ENCODE measurements at regions of chr18 and their contacts with region 1.

Region 1: GRCh38 chr18:2932247-2933181 is 80.4 kb downstream of the LPIN2 start:
- DNase-seq: peak; percentile 71
- H3K4me3 Mint-ChIP-seq: no peak overlapping the region
- H3K27ac Mint-ChIP-seq: no peak overlapping the region
- H3K4me1 Mint-ChIP-seq: peaks cover 10% of the 10 kb centered on the region
- H3K27me3 Mint-ChIP-seq: no peaks in the 10 kb centered on the region
- CTCF ChIP-seq: peak; percentile 69

Region 2: DNA sequence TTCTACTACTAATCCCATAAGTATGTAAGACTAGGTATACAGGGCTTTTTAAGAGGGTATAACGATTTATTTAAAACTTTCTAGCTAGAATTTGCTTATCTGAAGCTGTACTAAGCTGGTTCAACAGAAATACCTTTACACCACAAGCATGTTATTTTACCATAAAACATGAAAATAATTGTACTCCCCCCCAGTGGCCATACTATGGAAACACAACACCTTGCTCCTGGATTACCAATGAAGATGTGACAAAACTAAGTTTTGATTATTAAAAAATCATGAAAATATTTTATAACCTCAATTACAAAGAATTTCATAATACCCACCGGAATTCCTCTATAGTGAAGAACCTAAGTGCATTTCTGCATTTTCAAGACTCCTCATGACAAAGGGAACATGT is 53.1 kb after region 1 on chr18:
- CTCF ChIA-PET with region 1: interaction called, 11 read pairs
- POLR2A ChIA-PET with region 1: no interaction called
- intact Hi-C with region 1: no loop called
- DNase-seq: peak; percentile 52
- H3K4me3 Mint-ChIP-seq: no peak overlapping the region
- H3K27ac Mint-ChIP-seq: no peak overlapping the region
- H3K4me1 Mint-ChIP-seq: peaks cover 35% of the 10 kb centered on the region
- H3K27me3 Mint-ChIP-seq: no peaks in the 10 kb centered on the region
- CTCF ChIP-seq: peak; percentile 37

Region 3: GRCh38 chr18:3062798-3063680 is 130.5 kb after region 1 on chr18:
- CTCF ChIA-PET with region 1: interaction called, 7 read pairs
- POLR2A ChIA-PET with region 1: no interaction called
- intact Hi-C with region 1: loop called (anchors 2 kb)
- DNase-seq: peak; percentile 64
- H3K4me3 Mint-ChIP-seq: no peak overlapping the region
- H3K27ac Mint-ChIP-seq: no peak overlapping the region
- H3K4me1 Mint-ChIP-seq: peaks cover 6% of the 10 kb centered on the region
- H3K27me3 Mint-ChIP-seq: no peaks in the 10 kb centered on the region
- CTCF ChIP-seq: peak; percentile 59